ENCODE measurements at regions of chr2 and their contacts with region 1.

Region 1: GRCh38 chr2:152036611-152037469 is 62.0 kb downstream of the CACNB4 start:
- DNase-seq: no peak
- H3K4me3 ChIP-seq: no peak overlapping the region
- H3K27ac ChIP-seq: peak overlapping the region in 1 of 4 donors; percentile 26
- H3K4me1 ChIP-seq: peaks cover 14 to 42% (median 19%) of the 10 kb centered on the region in 4 donors
- H3K27me3 ChIP-seq: no peaks in the 10 kb centered on the region
- CTCF ChIP-seq: peak; percentile 69 to 74 (median 72)
- EP300 ChIP-seq: no peak
- POLR2A ChIP-seq: no peak

Region 2: GRCh38 chr2:152097801-152098495 is 61.1 kb after region 1 on chr2:
- intact Hi-C with region 1: loop called (anchors 5 kb)
- DNase-seq: no peak
- H3K4me3 ChIP-seq: peak overlapping the region; percentile 60 to 79 (median 68)
- H3K27ac ChIP-seq: peak overlapping the region; percentile 60 to 75 (median 64)
- H3K4me1 ChIP-seq: peaks cover 17 to 34% (median 28%) of the 10 kb centered on the region in 4 donors
- H3K27me3 ChIP-seq: peaks cover 0 to 39% (median 8%) of the 10 kb centered on the region in 4 donors
- CTCF ChIP-seq: no peak
- EP300 ChIP-seq: no peak
- POLR2A ChIP-seq: no peak

Region 3: GRCh38 chr2:152115952-152116351 is 79.1 kb after region 1 on chr2:
- intact Hi-C with region 1: loop called (anchors 5 kb)
- DNase-seq: no peak
- H3K4me3 ChIP-seq: no peak overlapping the region
- H3K27ac ChIP-seq: no peak overlapping the region
- H3K4me1 ChIP-seq: no peaks in the 10 kb centered on the region
- H3K27me3 ChIP-seq: no peaks in the 10 kb centered on the region
- CTCF ChIP-seq: no peak
- EP300 ChIP-seq: no peak
- POLR2A ChIP-seq: no peak

Region 4: GRCh38 chr2:152166633-152167032 is 129.8 kb after region 1 on chr2:
- intact Hi-C with region 1: loop called (anchors 5 kb)
- DNase-seq: no peak
- H3K4me3 ChIP-seq: no peak overlapping the region
- H3K27ac ChIP-seq: peak overlapping the region in 3 of 4 donors; percentile 15 to 43 (median 42)
- H3K4me1 ChIP-seq: peaks cover 13 to 68% (median 58%) of the 10 kb centered on the region in 4 donors
- H3K27me3 ChIP-seq: no peaks in the 10 kb centered on the region
- CTCF ChIP-seq: no peak
- EP300 ChIP-seq: no peak
- POLR2A ChIP-seq: no peak

Region 5: GRCh38 chr2:152247344-152247710 is 210.5 kb after region 1 on chr2:
- intact Hi-C with region 1: no loop called
- DNase-seq: no peak
- H3K4me3 ChIP-seq: no peak overlapping the region
- H3K27ac ChIP-seq: no peak overlapping the region
- H3K4me1 ChIP-seq: peaks cover 0 to 8% (median 6%) of the 10 kb centered on the region in 4 donors
- H3K27me3 ChIP-seq: no peaks in the 10 kb centered on the region
- CTCF ChIP-seq: no peak
- EP300 ChIP-seq: no peak
- POLR2A ChIP-seq: no peak

Region 6: GRCh38 chr2:152635635-152636298 is 598.9 kb after region 1 on chr2:
- intact Hi-C with region 1: loop called (anchors 10 kb)
- DNase-seq: no peak
- H3K4me3 ChIP-seq: no peak overlapping the region
- H3K27ac ChIP-seq: no peak overlapping the region
- H3K4me1 ChIP-seq: peaks cover 0 to 6% (median 3%) of the 10 kb centered on the region in 4 donors
- H3K27me3 ChIP-seq: no peaks in the 10 kb centered on the region
- CTCF ChIP-seq: peak; percentile 77 to 85 (median 78)
- EP300 ChIP-seq: no peak
- POLR2A ChIP-seq: no peak